ENCODE measurements at regions of chr17 and their contacts with region 1.

Region 1: DNA sequence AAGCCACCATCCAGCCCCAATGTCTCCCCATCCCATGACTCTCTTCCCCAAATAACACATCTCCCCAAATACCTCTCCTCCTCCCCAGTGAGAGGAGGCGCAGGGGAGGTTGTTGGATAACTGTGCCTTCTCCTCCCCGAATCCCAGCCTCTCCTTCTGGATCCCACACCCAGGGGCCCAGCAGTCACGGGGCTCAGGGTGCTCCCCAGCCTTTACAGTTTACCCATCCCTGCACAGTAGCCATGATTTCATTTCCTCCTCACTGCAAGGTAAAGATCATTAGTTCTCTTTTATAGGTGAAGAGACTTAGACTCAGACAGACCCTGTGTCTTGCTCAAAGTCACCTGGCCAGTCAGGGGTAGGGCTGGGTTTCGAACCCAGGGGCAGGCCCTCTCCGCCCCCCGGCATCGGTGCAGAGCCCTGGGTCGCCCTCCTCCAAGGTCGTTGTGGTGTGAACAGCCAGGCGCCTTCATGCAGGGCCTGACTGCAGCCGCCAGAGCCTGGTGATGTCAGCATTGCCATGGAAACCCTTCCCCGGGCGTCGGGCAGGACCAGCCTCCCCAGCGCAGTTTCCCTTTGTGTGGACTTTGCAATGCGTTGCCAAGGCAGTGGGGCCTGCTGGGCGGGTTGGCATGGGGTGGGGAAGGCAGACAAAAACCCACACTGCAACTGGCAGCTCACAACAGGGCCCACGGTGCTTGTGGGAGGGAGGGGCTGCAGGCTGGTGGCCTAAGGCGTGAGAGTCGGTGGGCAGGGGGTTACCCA is 53.3 kb upstream of the TOB1 start:
- DNase-seq: peak; percentile 93 to 95 (median 95)
- ATAC-seq: peak; percentile 81
- H3K4me3 ChIP-seq: no peak overlapping the region
- H3K4me1 ChIP-seq: peaks cover 73% of the 10 kb centered on the region
- CTCF ChIP-seq: no peak

Region 2: DNA sequence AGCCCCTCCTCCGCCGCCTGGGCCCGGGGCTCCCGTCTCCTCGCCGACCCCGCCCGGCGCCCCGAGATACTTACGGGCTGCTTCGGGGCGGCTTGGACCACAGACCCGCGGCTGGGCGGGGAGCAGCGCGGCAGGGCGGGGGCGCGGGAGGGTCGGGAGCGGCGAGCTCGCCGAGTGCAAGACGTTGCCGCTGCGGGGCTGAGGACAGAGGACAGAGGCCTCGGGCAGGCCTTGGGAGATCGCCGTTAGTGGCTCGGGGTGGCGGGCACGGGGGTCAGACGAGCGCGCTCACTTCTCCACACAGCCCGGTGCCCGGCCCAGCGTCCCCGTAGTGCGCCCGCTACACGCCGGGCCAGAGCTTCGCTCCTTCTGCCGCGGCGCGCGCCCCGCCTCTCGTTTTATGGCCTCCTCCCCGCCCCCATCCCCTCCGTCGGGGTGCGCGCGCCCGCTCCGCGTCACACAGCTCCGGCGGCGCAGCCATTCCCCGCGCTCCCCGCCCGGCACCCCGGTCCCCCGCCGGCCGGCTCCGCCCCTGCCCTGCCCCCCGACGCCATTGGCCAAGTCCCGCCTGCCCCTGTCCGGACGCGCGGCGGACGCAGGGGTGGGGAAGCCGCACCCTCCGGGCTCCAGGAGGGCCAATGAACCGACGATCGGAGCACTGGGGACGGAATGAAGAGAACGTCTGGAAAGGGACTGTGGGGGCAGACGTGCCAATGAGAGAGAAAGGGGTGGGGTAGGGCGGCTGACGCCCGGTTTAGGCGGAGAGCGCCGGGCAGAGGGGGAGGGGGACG is 53.3 kb before region 1 on chr17 and contains the start of gene TOB1:
- intact Hi-C with region 1: loop called in 1 of 2 experiments (anchors 10 kb)
- DNase-seq: peak; percentile 97 to 99 (median 99)
- ATAC-seq: peak; percentile 79
- H3K4me3 ChIP-seq: peak within 1 kb of the TSS; percentile 95
- H3K4me1 ChIP-seq: peaks cover 26% of the 10 kb centered on the region
- CTCF ChIP-seq: no peak
- total RNA-seq, gene TOB1: 120 to 156 (median 128) TPM

Region 3: GRCh38 chr17:50986989-50987660 is 67.6 kb after region 1 on chr17:
- intact Hi-C with region 1: no loop called
- DNase-seq: no peak
- ATAC-seq: no peak
- H3K4me3 ChIP-seq: no peak overlapping the region
- H3K4me1 ChIP-seq: no peaks in the 10 kb centered on the region
- CTCF ChIP-seq: no peak